ENCODE measurements at regions of chr16 and their contacts with region 1.

Region 1: DNA sequence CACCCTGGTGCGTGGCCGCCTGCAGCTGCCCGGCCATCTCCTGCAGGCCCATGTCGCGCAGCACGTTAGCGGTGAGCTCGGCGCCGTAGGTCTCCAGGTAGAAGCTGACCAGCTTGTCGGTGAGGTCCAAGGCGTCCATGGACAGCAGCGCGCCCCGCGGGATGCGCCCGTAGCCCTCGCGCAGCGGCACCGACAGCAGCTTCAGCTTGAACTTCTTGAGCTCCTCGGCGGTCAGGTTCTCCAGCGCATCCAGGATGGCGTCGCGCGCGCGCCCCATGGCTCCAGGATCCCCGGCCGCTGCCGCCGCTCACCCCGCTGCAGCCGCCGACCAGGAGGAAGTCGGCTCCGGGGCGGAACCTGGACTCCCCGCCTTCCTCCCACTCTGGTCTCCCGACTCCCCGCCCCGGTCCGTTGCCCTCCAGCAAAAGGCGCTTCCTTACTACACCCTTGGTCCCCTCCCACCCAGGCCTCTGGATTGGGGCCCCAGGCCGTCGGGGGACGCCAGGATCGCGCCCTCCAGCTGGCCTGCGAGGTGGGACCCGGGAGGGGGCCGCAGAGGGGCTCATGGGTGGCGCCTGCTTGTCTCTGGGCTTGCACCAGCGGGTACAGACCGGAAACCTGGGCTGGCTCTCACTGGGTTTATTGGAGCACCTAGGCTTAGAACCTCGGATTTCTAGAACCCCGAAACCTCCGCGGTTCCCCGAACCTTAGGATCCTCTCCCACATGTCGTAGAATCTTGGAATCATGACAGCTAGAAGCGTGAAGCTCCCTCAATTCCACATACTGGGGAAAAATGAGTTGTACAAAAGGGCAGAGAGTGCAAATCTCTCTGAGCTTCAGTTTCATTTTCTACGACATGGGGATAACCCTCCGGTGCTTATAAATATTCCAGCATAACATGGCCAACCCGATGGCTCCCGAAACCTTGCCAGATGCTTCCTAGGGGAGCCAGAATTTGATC is at the start of gene PYCARD:
- DNase-seq: no peak
- H3K4me3 ChIP-seq: peak within 1 kb of the TSS; percentile 18
- H3K4me3 Mint-ChIP-seq: peak within 1 kb of the TSS; percentile 37
- H3K27ac Mint-ChIP-seq: no peak within 1 kb of the TSS
- H3K4me1 ChIP-seq: no peaks in the 10 kb centered on the region; the same call in 1 of the 2 replicates
- H3K4me1 Mint-ChIP-seq: peaks cover 22% of the 10 kb centered on the region
- H3K27me3 ChIP-seq: no peaks in the 10 kb centered on the region
- H3K27me3 Mint-ChIP-seq: peaks cover 3% of the 10 kb centered on the region
- CTCF ChIP-seq: no peak
- total RNA-seq, gene PYCARD: 0.49 and 0.84 TPM in 2 replicates

Region 2: GRCh38 chr16:31298967-31299366 is 96.3 kb after region 1 on chr16:
- CTCF ChIA-PET with region 1: no interaction called
- POLR2A ChIA-PET with region 1: no interaction called
- intact Hi-C with region 1: loop called (anchors 10 kb)
- DNase-seq: no peak
- H3K4me3 ChIP-seq: no peak overlapping the region
- H3K4me3 Mint-ChIP-seq: no peak overlapping the region
- H3K27ac Mint-ChIP-seq: no peak overlapping the region
- H3K4me1 ChIP-seq: no peaks in the 10 kb centered on the region
- H3K4me1 Mint-ChIP-seq: no peaks in the 10 kb centered on the region
- H3K27me3 ChIP-seq: no peaks in the 10 kb centered on the region
- H3K27me3 Mint-ChIP-seq: peaks cover 12% of the 10 kb centered on the region
- CTCF ChIP-seq: peak in 1 of 2 experiments; percentile 45